Colonic mucosa (tissue), 4 donors: ENCODE measurements at regions of chr19 and their contacts with region 1.

Region 1: DNA sequence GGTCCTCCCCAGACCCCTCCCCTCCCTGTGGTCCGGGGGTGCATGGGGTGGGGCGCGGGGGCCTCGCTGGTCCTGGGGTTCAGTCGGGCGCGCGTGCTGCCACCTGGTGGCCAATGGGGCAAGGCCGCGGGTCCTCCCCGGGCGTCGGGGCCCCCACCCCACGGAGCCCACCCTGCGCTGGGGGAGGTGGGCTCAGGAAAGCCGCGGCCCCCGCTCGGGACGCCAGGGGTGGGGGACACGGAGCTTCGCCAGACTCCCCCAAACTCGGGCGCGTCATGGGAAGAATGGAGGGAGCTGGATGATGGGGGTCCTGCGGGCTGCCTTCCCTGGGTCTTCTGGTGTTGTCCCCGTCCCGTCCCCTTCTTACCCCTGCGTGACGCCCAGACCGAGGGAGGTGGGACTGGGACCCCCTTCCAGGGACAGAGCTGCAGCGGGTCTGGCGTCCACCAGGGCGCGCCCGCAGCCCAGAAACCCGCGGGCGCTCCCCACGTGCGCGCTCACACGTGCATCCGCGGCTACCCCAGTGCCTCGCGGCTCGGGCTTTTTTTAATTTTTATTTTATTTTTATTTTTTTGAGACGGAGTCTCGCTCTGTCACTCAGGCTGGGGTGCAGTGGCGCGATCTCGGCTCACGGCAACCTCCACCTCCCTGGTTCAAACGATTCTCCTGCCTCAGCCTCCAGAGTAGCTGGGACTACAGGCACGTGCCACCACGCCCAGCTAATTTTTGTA is 19.8 kb upstream of the TCF3 start:
- DNase-seq: peak; percentile 41
- H3K4me3 ChIP-seq: peak overlapping the region; percentile 9
- H3K27ac ChIP-seq: no peak overlapping the region
- H3K4me1 ChIP-seq: peaks cover 5% of the 10 kb centered on the region
- H3K27me3 ChIP-seq: peaks cover 50% of the 10 kb centered on the region
- CTCF ChIP-seq: peak; percentile 87

Region 2: DNA sequence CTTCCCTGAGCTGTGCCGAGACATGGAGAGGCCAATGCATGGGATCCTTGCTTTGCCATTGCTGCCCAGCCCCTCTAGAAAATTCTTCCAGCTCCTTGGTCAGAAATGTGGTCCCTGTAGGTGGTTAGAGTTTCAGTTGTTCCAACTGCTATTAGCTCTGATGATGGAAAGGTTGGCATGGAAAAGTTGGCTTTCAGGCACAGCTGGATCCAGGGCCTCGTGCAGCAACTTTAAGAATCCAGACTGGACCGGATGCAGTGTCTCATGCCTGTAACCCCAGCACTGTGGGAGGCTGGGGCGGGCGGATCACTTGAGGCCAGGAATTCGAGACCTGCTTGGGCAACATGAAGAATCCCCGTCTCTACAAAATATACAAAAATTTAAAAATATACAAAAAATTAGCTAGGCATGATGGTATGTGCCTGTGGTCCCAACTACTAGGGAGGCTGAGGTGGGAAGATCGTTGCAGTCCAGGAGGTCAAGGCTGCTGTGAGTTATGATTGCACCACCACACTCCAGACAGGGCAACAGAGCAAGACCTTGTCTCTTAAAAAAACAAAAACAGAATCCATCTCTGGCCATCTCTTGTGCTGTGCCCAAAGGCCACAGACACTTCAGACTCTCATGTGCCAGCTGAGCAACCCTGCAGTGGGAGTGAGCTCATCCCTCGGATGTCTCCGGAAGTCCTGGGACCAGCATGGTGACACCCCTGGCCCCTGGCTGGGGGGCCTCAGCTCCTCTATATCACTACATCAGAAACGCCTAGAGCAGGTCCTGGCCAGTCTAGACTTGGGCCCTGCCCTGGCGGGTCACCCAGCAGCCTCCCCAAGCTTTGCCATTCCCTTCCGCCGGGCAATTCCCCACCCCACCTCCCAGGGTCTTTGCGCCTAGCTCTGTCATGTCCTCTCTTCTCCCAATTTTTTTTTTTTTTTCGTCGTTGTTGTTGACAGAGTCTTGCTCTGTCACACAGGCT is 120.8 kb before region 1 on chr19:
- intact Hi-C with region 1: loop called (anchors 2 kb)
- DNase-seq: no peak
- H3K4me3 ChIP-seq: no peak overlapping the region
- H3K27ac ChIP-seq: no peak overlapping the region
- H3K4me1 ChIP-seq: no peaks in the 10 kb centered on the region
- H3K27me3 ChIP-seq: no peaks in the 10 kb centered on the region
- CTCF ChIP-seq: no peak

Region 3: DNA sequence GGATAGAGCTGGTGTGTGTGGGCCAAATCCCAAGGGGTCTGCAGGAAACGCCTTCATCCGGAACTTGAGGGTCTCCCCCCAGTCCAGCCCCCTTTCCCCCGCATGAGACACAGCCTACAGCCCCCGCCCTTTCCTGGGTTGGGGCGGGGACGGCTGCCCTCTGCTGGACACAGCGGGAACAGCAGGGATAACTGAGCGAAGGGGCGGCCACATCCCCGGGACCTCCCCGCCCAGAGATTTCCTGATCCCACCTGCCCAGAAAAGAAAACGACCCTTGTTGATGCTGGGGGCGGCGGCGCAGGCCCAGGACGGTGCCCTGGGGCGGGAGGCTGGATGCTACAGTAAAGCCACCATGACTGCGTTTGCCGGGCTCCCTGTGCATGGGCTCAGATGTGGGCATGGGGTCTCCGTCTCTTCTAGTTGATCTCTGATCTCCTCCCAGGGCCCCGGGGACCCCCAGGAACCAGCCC is 95.3 kb after region 1 on chr19:
- intact Hi-C with region 1: loop called (anchors 5 kb)
- DNase-seq: peak; percentile 47
- H3K4me3 ChIP-seq: no peak overlapping the region
- H3K27ac ChIP-seq: no peak overlapping the region
- H3K4me1 ChIP-seq: no peaks in the 10 kb centered on the region
- H3K27me3 ChIP-seq: peaks cover 54% of the 10 kb centered on the region
- CTCF ChIP-seq: peak; percentile 88